GM12878 (cell line): ENCODE measurements at regions of chr1 and their contacts with region 1.

Region 1: GRCh38 chr1:170074250-170075157 is at the start of gene KIFAP3:
- DNase-seq: peak; percentile 98
- ATAC-seq: peak; percentile 95
- H3K4me3 ChIP-seq: peak within 1 kb of the TSS; percentile 75
- H3K27ac ChIP-seq: peak within 1 kb of the TSS; percentile 78
- H3K4me1 ChIP-seq: no peaks in the 10 kb centered on the region
- H3K27me3 ChIP-seq: no peaks in the 10 kb centered on the region
- CTCF ChIP-seq: peak; percentile 52 to 72 (median 65)
- EP300 ChIP-seq: no peak
- POLR2A ChIP-seq: peak; percentile 86
- RAD21 ChIP-seq: peak; percentile 58
- polyA plus RNA-seq, gene KIFAP3: 15.8 to 16.9 TPM

Region 2: GRCh38 chr1:169694304-169695075 is 380.0 kb before region 1 on chr1:
- CTCF ChIA-PET with region 1: no interaction called
- POLR2A ChIA-PET with region 1: no interaction called
- RAD21 ChIA-PET with region 1: no interaction called
- SMC1A ChIA-PET with region 1: no interaction called
- in situ Hi-C with region 1: no loop called
- intact Hi-C with region 1: loop called (anchors 5 kb)
- DNase-seq: no peak
- ATAC-seq: peak; percentile 51
- H3K4me3 ChIP-seq: no peak overlapping the region
- H3K27ac ChIP-seq: peak overlapping the region; percentile 67; the same call in 1 of the 2 replicates
- H3K4me1 ChIP-seq: peaks cover 80% of the 10 kb centered on the region
- H3K27me3 ChIP-seq: no peaks in the 10 kb centered on the region
- CTCF ChIP-seq: peak in 2 of 3 experiments; percentile 10 to 26; a peak in 2 of 6 replicates
- EP300 ChIP-seq: no peak
- POLR2A ChIP-seq: no peak
- RAD21 ChIP-seq: peak; percentile 42; the same call in 1 of the 2 replicates

Region 3: GRCh38 chr1:169914531-169914930 is 160.0 kb before region 1 on chr1:
- CTCF ChIA-PET with region 1: interaction called, 3 read pairs
- POLR2A ChIA-PET with region 1: interaction called, 3 read pairs
- RAD21 ChIA-PET with region 1: interaction called, 8 read pairs
- SMC1A ChIA-PET with region 1: interaction called, 5 read pairs
- in situ Hi-C with region 1: no loop called
- intact Hi-C with region 1: loop called (anchors 5 kb)
- DNase-seq: no peak
- ATAC-seq: no peak
- H3K4me3 ChIP-seq: peak overlapping the region; percentile 61
- H3K27ac ChIP-seq: peak overlapping the region; percentile 78
- H3K4me1 ChIP-seq: peaks cover 55% of the 10 kb centered on the region
- H3K27me3 ChIP-seq: no peaks in the 10 kb centered on the region
- CTCF ChIP-seq: no peak
- EP300 ChIP-seq: no peak
- POLR2A ChIP-seq: no peak
- RAD21 ChIP-seq: no peak

Region 4: GRCh38 chr1:170126696-170127095 is 52.2 kb after region 1 on chr1:
- CTCF ChIA-PET with region 1: interaction called, 3 read pairs
- POLR2A ChIA-PET with region 1: interaction called, 3 read pairs
- RAD21 ChIA-PET with region 1: interaction called, 8 read pairs
- SMC1A ChIA-PET with region 1: interaction called, 3 read pairs
- in situ Hi-C with region 1: no loop called
- intact Hi-C with region 1: loop called (anchors 2 kb)
- DNase-seq: peak; percentile 72
- ATAC-seq: peak; percentile 100
- H3K4me3 ChIP-seq: no peak overlapping the region
- H3K27ac ChIP-seq: 0 out of 2 replicates have a peak overlapping the region, but pooled peaks have one; percentile 18
- H3K4me1 ChIP-seq: peaks cover 3% of the 10 kb centered on the region; the same call in 1 of the 2 replicates
- H3K27me3 ChIP-seq: no peaks in the 10 kb centered on the region
- CTCF ChIP-seq: peak; percentile 19 to 32 (median 30); a peak in 3 of 6 replicates
- EP300 ChIP-seq: no peak; a peak in 1 of 4 replicates
- POLR2A ChIP-seq: no peak
- RAD21 ChIP-seq: peak; percentile 40

Region 5: GRCh38 chr1:170326186-170326585 is 251.7 kb after region 1 on chr1:
- CTCF ChIA-PET with region 1: no interaction called
- POLR2A ChIA-PET with region 1: no interaction called
- RAD21 ChIA-PET with region 1: no interaction called
- SMC1A ChIA-PET with region 1: no interaction called
- in situ Hi-C with region 1: no loop called
- intact Hi-C with region 1: no loop called
- DNase-seq: no peak
- ATAC-seq: no peak
- H3K4me3 ChIP-seq: no peak overlapping the region
- H3K27ac ChIP-seq: no peak overlapping the region
- H3K4me1 ChIP-seq: no peaks in the 10 kb centered on the region
- H3K27me3 ChIP-seq: no peaks in the 10 kb centered on the region
- CTCF ChIP-seq: no peak
- EP300 ChIP-seq: no peak
- POLR2A ChIP-seq: no peak
- RAD21 ChIP-seq: no peak

Region 6: DNA sequence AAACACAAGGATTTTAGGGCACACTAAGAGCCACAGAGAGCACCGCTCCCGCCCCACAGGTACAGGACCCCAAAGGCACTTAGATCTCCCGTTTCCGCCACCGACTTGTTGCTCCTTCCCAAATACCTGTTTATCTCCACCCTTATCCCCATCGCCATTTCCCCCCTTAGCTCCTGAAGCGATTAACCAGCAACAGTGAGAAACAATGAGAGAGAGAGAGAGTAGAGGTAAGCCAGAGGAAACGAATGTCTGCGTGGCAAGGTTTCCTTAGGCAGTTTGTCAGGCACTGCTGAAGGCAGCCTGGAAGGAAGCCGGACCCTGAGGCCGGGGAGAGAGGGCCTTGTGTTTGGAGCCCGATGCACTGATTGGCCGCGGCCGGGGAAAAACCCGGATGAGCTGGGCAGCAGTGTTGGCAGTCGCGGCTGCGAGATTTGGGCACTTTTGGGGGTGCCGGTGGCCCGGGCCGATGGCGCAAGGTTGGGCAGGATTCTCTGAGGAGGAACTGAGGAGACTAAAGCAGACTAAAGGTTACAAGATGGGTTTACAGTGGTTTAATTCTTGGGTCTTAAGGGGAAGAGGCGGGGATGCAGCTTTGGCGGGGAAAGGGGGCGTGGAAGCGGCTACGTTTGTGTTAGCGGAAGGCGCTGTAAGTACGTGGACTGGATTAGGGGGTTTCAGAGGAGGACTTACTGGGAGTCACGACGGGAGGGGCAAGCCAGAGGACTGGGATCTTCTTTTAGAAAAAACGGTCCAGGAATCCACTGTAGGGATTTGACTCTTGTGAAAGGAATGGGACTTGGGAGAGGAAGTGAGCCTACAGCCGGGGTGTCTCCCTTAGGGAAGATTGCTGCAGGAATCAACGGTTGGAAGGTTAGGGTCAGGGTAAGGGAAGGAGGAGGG is 457.5 kb after region 1 on chr1 and contains the start of gene GORAB:
- CTCF ChIA-PET with region 1: no interaction called
- POLR2A ChIA-PET with region 1: interaction called, 7 read pairs
- RAD21 ChIA-PET with region 1: interaction called, 7 read pairs
- SMC1A ChIA-PET with region 1: interaction called, 15 read pairs
- in situ Hi-C with region 1: loop called (anchors 10 kb)
- intact Hi-C with region 1: no loop called
- DNase-seq: peak; percentile 82
- ATAC-seq: peak; percentile 94
- H3K4me3 ChIP-seq: peak within 1 kb of the TSS; percentile 85
- H3K27ac ChIP-seq: peak within 1 kb of the TSS; percentile 99
- H3K4me1 ChIP-seq: no peaks in the 10 kb centered on the region
- H3K27me3 ChIP-seq: no peaks in the 10 kb centered on the region
- CTCF ChIP-seq: no peak
- EP300 ChIP-seq: no peak
- POLR2A ChIP-seq: peak; percentile 93
- RAD21 ChIP-seq: no peak
- polyA plus RNA-seq, gene GORAB: 5.5 to 7.6 TPM

Region 7: GRCh38 chr1:170881268-170882265 is 807.1 kb after region 1 on chr1:
- CTCF ChIA-PET with region 1: no interaction called
- POLR2A ChIA-PET with region 1: no interaction called
- RAD21 ChIA-PET with region 1: interaction called, 3 read pairs
- SMC1A ChIA-PET with region 1: no interaction called
- in situ Hi-C with region 1: no loop called
- intact Hi-C with region 1: loop called (anchors 5 kb)
- DNase-seq: peak; percentile 23
- ATAC-seq: peak; percentile 76
- H3K4me3 ChIP-seq: no peak overlapping the region
- H3K27ac ChIP-seq: no peak overlapping the region
- H3K4me1 ChIP-seq: no peaks in the 10 kb centered on the region
- H3K27me3 ChIP-seq: no peaks in the 10 kb centered on the region
- CTCF ChIP-seq: peak; percentile 42 to 75 (median 53); a peak in 5 of 6 replicates
- EP300 ChIP-seq: no peak
- POLR2A ChIP-seq: no peak
- RAD21 ChIP-seq: peak; percentile 87